ENCODE measurements at regions of chr2 and their contacts with region 1.

Region 1: GRCh38 chr2:26202981-26203490 is 30.1 kb downstream of the GAREM2 start:
- DNase-seq: no peak
- ATAC-seq: no peak
- H3K4me3 ChIP-seq: no peak overlapping the region
- H3K27ac ChIP-seq: no peak overlapping the region
- H3K4me1 ChIP-seq: no peaks in the 10 kb centered on the region
- H3K27me3 ChIP-seq: no peaks in the 10 kb centered on the region
- CTCF ChIP-seq: no peak
- POLR2A ChIP-seq: no peak
- RAD21 ChIP-seq: no peak

Region 2: GRCh38 chr2:25894135-25894830 is 308.8 kb before region 1 on chr2:
- CTCF ChIA-PET with region 1: no interaction called
- POLR2A ChIA-PET with region 1: no interaction called
- dilution Hi-C with region 1: no loop called
- in situ Hi-C with region 1: no loop called
- intact Hi-C with region 1: no loop called
- DNase-seq: peak; percentile 56
- ATAC-seq: no peak
- H3K4me3 ChIP-seq: no peak overlapping the region
- H3K27ac ChIP-seq: no peak overlapping the region
- H3K4me1 ChIP-seq: peaks cover 3% of the 10 kb centered on the region; the same call in 1 of the 2 replicates
- H3K27me3 ChIP-seq: peaks cover 2% of the 10 kb centered on the region; the same call in 1 of the 2 replicates
- CTCF ChIP-seq: no peak
- POLR2A ChIP-seq: no peak
- RAD21 ChIP-seq: no peak

Region 3: GRCh38 chr2:26216587-26216986 is 13.6 kb after region 1 on chr2:
- CTCF ChIA-PET with region 1: no interaction called
- POLR2A ChIA-PET with region 1: no interaction called
- dilution Hi-C with region 1: no loop called
- in situ Hi-C with region 1: no loop called
- intact Hi-C with region 1: no loop called
- DNase-seq: no peak
- ATAC-seq: no peak
- H3K4me3 ChIP-seq: no peak overlapping the region
- H3K27ac ChIP-seq: no peak overlapping the region
- H3K4me1 ChIP-seq: no peaks in the 10 kb centered on the region
- H3K27me3 ChIP-seq: no peaks in the 10 kb centered on the region
- CTCF ChIP-seq: no peak
- POLR2A ChIP-seq: no peak
- RAD21 ChIP-seq: no peak

Region 4: GRCh38 chr2:26235085-26235484 is 32.0 kb after region 1 on chr2:
- CTCF ChIA-PET with region 1: no interaction called
- POLR2A ChIA-PET with region 1: no interaction called
- dilution Hi-C with region 1: no loop called
- in situ Hi-C with region 1: no loop called
- intact Hi-C with region 1: loop called (anchors 5 kb)
- DNase-seq: no peak
- ATAC-seq: no peak
- H3K4me3 ChIP-seq: no peak overlapping the region
- H3K27ac ChIP-seq: no peak overlapping the region
- H3K4me1 ChIP-seq: no peaks in the 10 kb centered on the region
- H3K27me3 ChIP-seq: no peaks in the 10 kb centered on the region
- CTCF ChIP-seq: 0 out of 2 replicates have a peak, but pooled peaks have one; percentile 14
- POLR2A ChIP-seq: no peak
- RAD21 ChIP-seq: 0 out of 2 replicates have a peak, but pooled peaks have one; percentile 19